ENCODE measurements at regions of chr20 and their contacts with region 1.

Region 1: DNA sequence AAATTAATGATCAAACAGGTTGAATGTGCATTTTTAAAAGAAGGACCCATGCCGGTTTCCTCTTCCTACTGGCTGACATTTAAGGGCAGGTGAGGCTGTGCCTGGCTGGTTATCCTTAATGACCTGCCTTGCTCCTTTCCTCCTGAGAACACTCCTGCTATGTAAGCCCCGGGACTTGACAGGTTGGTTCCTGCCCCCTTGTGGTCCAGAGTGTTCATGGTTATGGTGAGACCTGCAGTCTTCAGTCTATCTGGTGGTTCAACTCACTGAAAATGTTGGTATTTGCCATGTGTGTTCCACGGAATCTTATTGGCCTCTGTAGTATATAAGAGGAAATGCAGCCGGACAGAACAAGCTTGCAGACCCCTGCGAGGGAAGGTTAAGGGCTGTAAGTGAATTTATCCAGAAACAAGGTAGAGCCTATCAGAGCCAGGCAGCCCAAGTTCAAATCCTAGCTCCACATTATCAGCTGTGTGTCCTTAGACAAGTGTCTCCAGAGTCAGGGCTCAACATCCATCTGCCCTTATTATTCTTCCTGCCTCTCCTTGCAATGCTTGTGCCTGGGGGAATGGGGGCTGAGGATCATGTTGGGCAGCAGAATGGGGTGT is 5.2 kb upstream of the BPIFA3 start:
- DNase-seq: peak; percentile 76 to 86 (median 80)
- ATAC-seq: peak; percentile 75
- H3K4me3 ChIP-seq: no peak overlapping the region
- H3K27ac ChIP-seq: no peak overlapping the region
- H3K4me1 ChIP-seq: no peaks in the 10 kb centered on the region
- H3K27me3 ChIP-seq: no peaks in the 10 kb centered on the region
- CTCF ChIP-seq: peak in 6 of 7 experiments; percentile 34 to 80 (median 70)
- POLR2A ChIP-seq: no peak

Region 2: GRCh38 chr20:32664678-32665159 is 547.2 kb before region 1 on chr20:
- intact Hi-C with region 1: no loop called
- DNase-seq: peak; percentile 26 to 61 (median 42)
- ATAC-seq: peak; percentile 40
- H3K4me3 ChIP-seq: no peak overlapping the region
- H3K27ac ChIP-seq: peak overlapping the region; percentile 32 to 82 (median 70)
- H3K4me1 ChIP-seq: peaks cover 21% of the 10 kb centered on the region
- H3K27me3 ChIP-seq: no peaks in the 10 kb centered on the region
- CTCF ChIP-seq: no peak
- POLR2A ChIP-seq: no peak

Region 3: GRCh38 chr20:33097001-33097400 is 114.9 kb before region 1 on chr20:
- intact Hi-C with region 1: loop called (anchors 10 kb)
- DNase-seq: no peak
- ATAC-seq: no peak
- H3K4me3 ChIP-seq: no peak overlapping the region
- H3K27ac ChIP-seq: no peak overlapping the region
- H3K4me1 ChIP-seq: no peaks in the 10 kb centered on the region
- H3K27me3 ChIP-seq: no peaks in the 10 kb centered on the region
- CTCF ChIP-seq: no peak
- POLR2A ChIP-seq: no peak

Region 4: GRCh38 chr20:33169176-33169794 is 42.6 kb before region 1 on chr20:
- intact Hi-C with region 1: no loop called
- DNase-seq: no peak
- ATAC-seq: no peak
- H3K4me3 ChIP-seq: no peak overlapping the region
- H3K27ac ChIP-seq: no peak overlapping the region
- H3K4me1 ChIP-seq: no peaks in the 10 kb centered on the region
- H3K27me3 ChIP-seq: no peaks in the 10 kb centered on the region
- CTCF ChIP-seq: peak in 3 of 7 experiments; percentile 9 to 19 (median 14)
- POLR2A ChIP-seq: no peak

Measured in body of pancreas (tissue), 4 donors.